ENCODE measurements at regions of chr15 and their contacts with region 1.

Region 1: DNA sequence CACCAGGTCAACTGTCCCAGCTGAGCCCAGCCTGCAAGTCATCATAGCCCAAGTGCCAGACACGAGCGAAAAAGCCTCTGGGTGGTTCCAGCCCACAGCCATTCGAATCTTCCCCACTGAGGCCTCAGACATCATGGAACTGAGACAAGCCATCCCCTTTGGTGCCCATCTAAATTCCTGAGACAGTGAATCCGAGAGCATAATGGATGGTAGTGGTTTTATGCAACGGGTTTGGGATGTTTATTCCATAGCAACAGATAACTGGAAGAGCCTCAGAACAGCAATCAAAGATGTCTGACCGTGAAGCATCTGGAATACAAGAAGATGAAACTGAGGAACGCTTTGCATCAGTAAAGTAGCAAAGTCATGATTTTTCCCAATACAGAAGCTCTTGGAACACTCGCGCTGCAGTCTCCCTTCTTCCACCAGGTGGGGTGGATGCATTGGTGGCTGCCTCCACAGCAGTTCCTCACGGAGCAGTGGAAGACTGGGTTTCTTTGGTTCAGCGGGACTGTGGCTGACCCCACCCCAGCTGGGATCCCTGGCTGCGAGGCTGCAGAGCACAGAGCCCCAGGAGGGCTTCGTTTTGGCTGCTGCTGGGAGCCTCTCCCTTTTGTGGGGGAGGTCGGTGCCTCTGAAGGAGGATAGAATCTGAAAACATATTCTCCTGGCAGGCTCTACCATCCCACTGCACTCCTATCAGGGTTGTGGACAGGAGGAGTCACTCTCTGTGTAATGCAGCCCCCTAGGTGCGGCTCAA is 26.4 kb upstream of the PDE8A start:
- DNase-seq: peak; percentile 85
- H3K4me3 Mint-ChIP-seq: peak overlapping the region; percentile 12
- H3K27ac Mint-ChIP-seq: peak overlapping the region; percentile 0
- H3K4me1 Mint-ChIP-seq: peaks cover 10% of the 10 kb centered on the region
- H3K27me3 Mint-ChIP-seq: no peaks in the 10 kb centered on the region
- CTCF ChIP-seq: peak; percentile 65

Region 2: GRCh38 chr15:84981054-84981710 is 25.9 kb after region 1 on chr15:
- CTCF ChIA-PET with region 1: interaction called, 7 read pairs
- intact Hi-C with region 1: loop called (anchors 1 kb)
- DNase-seq: peak; percentile 99
- H3K4me3 Mint-ChIP-seq: peak overlapping the region; percentile 97
- H3K27ac Mint-ChIP-seq: peak overlapping the region; percentile 94
- H3K4me1 Mint-ChIP-seq: peaks cover 28% of the 10 kb centered on the region
- H3K27me3 Mint-ChIP-seq: no peaks in the 10 kb centered on the region
- CTCF ChIP-seq: peak; percentile 49

Region 3: GRCh38 chr15:85005319-85005718 is 50.0 kb after region 1 on chr15:
- CTCF ChIA-PET with region 1: interaction called, 3 read pairs
- intact Hi-C with region 1: loop called (anchors 5 kb)
- DNase-seq: no peak
- H3K4me3 Mint-ChIP-seq: no peak overlapping the region
- H3K27ac Mint-ChIP-seq: no peak overlapping the region
- H3K4me1 Mint-ChIP-seq: peaks cover 65% of the 10 kb centered on the region
- H3K27me3 Mint-ChIP-seq: no peaks in the 10 kb centered on the region
- CTCF ChIP-seq: no peak

Region 4: GRCh38 chr15:85044251-85044853 is 89.1 kb after region 1 on chr15:
- CTCF ChIA-PET with region 1: interaction called, 19 read pairs
- intact Hi-C with region 1: loop called (anchors 1 kb)
- DNase-seq: peak; percentile 76
- H3K4me3 Mint-ChIP-seq: no peak overlapping the region
- H3K27ac Mint-ChIP-seq: no peak overlapping the region
- H3K4me1 Mint-ChIP-seq: peaks cover 33% of the 10 kb centered on the region
- H3K27me3 Mint-ChIP-seq: no peaks in the 10 kb centered on the region
- CTCF ChIP-seq: peak; percentile 33

Region 5: DNA sequence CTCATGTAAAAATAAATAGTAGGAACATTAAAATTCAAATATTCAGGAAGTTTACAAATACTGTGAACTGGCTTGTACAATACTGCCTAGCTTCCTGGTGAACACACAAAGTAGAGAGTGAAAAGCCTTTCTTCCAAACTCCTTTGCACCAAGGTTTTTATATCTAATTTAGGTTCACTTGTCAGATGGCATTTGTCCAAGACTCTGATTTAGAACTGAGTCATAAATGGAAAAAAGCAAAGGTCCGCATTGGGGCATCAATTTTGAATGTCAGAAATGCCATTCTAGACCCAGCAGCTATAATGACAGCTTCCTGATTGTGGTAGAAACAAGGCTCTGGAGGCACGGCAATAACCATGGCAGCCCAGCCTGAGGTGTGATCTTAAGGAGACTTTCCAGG is 187.0 kb after region 1 on chr15:
- CTCF ChIA-PET with region 1: no interaction called
- intact Hi-C with region 1: loop called (anchors 10 kb)
- DNase-seq: peak; percentile 47
- H3K4me3 Mint-ChIP-seq: no peak overlapping the region
- H3K27ac Mint-ChIP-seq: peak overlapping the region; percentile 17
- H3K4me1 Mint-ChIP-seq: peaks cover 14% of the 10 kb centered on the region
- H3K27me3 Mint-ChIP-seq: no peaks in the 10 kb centered on the region
- CTCF ChIP-seq: no peak

Region 6: GRCh38 chr15:85168642-85169173 is 213.4 kb after region 1 on chr15:
- CTCF ChIA-PET with region 1: interaction called, 15 read pairs
- intact Hi-C with region 1: no loop called
- DNase-seq: peak; percentile 83
- H3K4me3 Mint-ChIP-seq: peak overlapping the region; percentile 75
- H3K27ac Mint-ChIP-seq: no peak overlapping the region
- H3K4me1 Mint-ChIP-seq: peaks cover 18% of the 10 kb centered on the region
- H3K27me3 Mint-ChIP-seq: no peaks in the 10 kb centered on the region
- CTCF ChIP-seq: peak; percentile 91

Region 7: DNA sequence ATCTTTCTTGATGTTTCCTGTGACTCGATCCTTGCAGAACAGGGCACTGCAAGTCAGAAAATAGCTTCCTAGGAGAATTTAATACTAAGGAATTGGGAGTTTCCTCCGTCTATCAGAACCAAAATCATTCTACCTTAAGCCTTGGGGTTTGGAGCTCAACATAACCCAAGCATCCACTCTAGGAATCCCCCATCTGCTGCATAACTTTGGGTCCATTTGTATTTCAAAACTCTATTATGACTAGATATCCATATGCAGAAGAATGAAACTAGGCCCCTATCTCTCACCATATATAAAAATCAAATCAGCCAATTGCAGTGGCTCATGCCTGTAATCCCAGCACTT is 363.4 kb after region 1 on chr15:
- CTCF ChIA-PET with region 1: no interaction called
- intact Hi-C with region 1: no loop called
- DNase-seq: no peak
- H3K4me3 Mint-ChIP-seq: no peak overlapping the region
- H3K27ac Mint-ChIP-seq: no peak overlapping the region
- H3K4me1 Mint-ChIP-seq: peaks cover 9% of the 10 kb centered on the region
- H3K27me3 Mint-ChIP-seq: no peaks in the 10 kb centered on the region
- CTCF ChIP-seq: no peak